ENCODE measurements at regions of chr2 and their contacts with region 1.

Region 1: DNA sequence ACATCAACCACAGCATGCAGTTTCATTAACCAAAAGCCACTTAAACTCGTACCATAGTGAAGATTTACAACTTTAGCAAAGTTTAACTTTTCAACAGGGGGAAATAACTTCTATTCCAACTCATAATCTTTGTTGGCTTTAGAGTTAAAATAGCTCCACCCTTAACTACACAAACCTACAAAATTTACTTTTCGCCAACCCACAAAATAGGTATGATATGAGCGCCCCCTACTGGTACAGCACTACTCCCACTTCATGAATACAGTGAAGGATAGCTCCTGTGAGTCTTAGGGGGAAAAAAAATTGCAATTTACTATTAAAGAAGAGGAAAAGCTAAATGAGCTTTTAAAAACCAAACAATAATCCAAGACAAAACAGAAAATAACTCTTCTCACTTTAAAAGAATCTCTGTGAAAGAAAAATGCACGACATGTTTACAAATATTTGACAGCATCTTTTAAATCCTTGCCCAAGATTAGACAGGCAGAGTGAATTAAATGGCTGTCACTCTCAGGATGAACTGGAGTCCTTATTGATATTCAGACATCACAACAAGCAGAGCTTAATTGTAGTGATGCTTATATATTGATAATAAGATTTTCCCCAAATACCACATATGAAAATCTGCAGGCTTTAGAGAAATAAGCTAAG is 32.2 kb downstream of the TMEFF2 start:
- DNase-seq: peak; percentile 80
- ATAC-seq: peak; percentile 81
- H3K4me3 Mint-ChIP-seq: no peak overlapping the region
- H3K27ac Mint-ChIP-seq: no peak overlapping the region
- H3K4me1 Mint-ChIP-seq: peaks cover 7% of the 10 kb centered on the region
- H3K27me3 Mint-ChIP-seq: peaks cover 13% of the 10 kb centered on the region

Region 2: DNA sequence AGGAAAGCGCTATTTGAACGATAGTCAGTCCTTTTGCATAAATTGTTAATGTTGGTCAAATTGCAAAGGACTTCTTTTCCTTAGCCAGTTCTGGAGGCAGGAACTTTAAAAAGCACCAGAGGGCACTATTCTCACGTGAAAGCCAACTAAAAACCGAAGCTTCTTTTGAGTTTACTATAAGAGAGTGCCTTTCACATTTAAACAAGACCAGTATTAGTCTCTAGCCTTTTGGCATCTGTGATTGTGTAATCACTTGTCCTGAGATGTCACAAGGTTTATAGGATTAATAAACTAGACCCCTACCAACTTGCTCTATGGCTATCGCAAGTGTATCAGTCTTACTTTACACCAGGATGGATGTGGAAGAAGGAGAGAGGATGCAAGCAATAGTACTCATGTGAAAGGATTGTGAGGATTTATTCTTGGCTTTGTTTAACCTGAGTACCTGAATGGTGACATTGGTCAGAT is 997.3 kb before region 1 on chr2:
- CTCF ChIA-PET with region 1: interaction called, 12 read pairs
- POLR2A ChIA-PET with region 1: no interaction called
- DNase-seq: peak; percentile 47
- ATAC-seq: peak; percentile 87
- H3K4me3 Mint-ChIP-seq: no peak overlapping the region
- H3K27ac Mint-ChIP-seq: no peak overlapping the region
- H3K4me1 Mint-ChIP-seq: peaks cover 22% of the 10 kb centered on the region
- H3K27me3 Mint-ChIP-seq: peaks cover 12% of the 10 kb centered on the region

Region 3: DNA sequence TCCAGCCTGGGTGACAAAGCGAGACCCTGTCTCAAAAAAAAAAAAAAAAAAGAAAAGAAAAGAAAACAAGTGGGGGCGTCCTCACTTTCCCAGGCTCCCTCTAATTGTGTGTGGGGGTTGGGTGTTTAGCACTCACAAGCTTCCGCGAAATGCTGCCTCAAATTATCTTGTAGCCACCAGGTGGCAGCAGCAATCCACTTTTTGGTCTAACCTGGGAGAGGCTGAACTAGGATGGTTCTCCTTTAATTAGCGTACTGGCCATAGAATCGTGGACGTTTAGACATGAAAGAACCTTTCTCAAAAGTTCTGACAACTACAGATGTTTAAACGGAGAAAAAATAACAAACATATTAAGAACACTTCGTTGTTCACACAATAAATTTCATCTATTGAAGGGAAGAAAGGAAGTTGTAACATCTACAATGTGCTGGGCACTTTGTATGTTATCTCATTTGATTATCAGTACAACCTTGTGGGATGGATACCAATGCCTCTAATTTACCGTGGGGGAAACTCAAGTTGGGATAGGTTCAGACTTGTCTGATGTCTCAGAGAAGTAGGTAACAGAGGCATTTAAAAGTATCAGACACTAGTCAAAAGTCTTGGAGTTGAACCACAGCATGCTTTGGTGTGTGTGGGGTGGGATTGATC is 607.3 kb before region 1 on chr2:
- CTCF ChIA-PET with region 1: interaction called, 95 read pairs
- POLR2A ChIA-PET with region 1: no interaction called
- DNase-seq: peak; percentile 87
- ATAC-seq: peak; percentile 88
- H3K4me3 Mint-ChIP-seq: no peak overlapping the region
- H3K27ac Mint-ChIP-seq: no peak overlapping the region
- H3K4me1 Mint-ChIP-seq: peaks cover 21% of the 10 kb centered on the region
- H3K27me3 Mint-ChIP-seq: peaks cover 28% of the 10 kb centered on the region

Region 4: GRCh38 chr2:191758518-191759507 is 403.7 kb before region 1 on chr2:
- CTCF ChIA-PET with region 1: interaction called, 20 read pairs
- POLR2A ChIA-PET with region 1: no interaction called
- DNase-seq: peak; percentile 64
- ATAC-seq: peak; percentile 97
- H3K4me3 Mint-ChIP-seq: no peak overlapping the region
- H3K27ac Mint-ChIP-seq: no peak overlapping the region
- H3K4me1 Mint-ChIP-seq: peaks cover 4% of the 10 kb centered on the region
- H3K27me3 Mint-ChIP-seq: peaks cover 16% of the 10 kb centered on the region

Region 5: DNA sequence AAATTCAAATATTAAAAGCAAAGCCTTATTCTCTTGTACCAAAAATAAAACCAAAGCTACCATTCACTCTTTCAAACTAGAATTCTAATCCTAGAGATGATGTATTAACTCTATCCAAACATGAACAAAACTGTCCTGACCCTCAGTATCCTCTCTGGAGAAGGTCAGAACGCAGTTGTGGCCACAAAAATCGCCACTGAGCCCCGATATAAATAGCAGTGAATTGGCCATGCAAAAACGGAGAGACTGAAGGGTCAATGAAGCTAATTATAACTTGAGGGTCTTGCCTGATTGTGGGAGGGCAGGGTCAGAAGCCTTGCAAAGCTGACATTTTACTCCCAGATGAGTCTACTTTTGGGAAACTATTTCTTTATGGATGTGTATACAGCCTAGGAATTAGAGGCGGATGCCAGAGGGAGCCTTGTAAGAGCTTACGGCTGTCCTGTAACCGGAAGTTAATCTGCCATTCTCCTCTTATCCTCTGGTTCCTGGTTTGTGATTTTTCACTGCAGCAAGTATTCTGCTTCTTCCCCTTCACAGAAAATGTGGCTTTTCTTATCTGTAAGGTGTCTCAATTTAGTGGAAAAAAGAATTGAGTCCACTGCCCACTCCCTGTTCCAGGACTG is 343.7 kb before region 1 on chr2:
- CTCF ChIA-PET with region 1: interaction called, 65 read pairs
- POLR2A ChIA-PET with region 1: no interaction called
- DNase-seq: no peak
- ATAC-seq: no peak
- H3K4me3 Mint-ChIP-seq: no peak overlapping the region
- H3K27ac Mint-ChIP-seq: no peak overlapping the region
- H3K4me1 Mint-ChIP-seq: no peaks in the 10 kb centered on the region
- H3K27me3 Mint-ChIP-seq: peaks cover 20% of the 10 kb centered on the region

Region 6: GRCh38 chr2:192007581-192008228 is 154.8 kb before region 1 on chr2:
- CTCF ChIA-PET with region 1: no interaction called
- POLR2A ChIA-PET with region 1: no interaction called
- DNase-seq: no peak
- ATAC-seq: no peak
- H3K4me3 Mint-ChIP-seq: no peak overlapping the region
- H3K27ac Mint-ChIP-seq: no peak overlapping the region
- H3K4me1 Mint-ChIP-seq: no peaks in the 10 kb centered on the region
- H3K27me3 Mint-ChIP-seq: peaks cover 10% of the 10 kb centered on the region

Region 7: DNA sequence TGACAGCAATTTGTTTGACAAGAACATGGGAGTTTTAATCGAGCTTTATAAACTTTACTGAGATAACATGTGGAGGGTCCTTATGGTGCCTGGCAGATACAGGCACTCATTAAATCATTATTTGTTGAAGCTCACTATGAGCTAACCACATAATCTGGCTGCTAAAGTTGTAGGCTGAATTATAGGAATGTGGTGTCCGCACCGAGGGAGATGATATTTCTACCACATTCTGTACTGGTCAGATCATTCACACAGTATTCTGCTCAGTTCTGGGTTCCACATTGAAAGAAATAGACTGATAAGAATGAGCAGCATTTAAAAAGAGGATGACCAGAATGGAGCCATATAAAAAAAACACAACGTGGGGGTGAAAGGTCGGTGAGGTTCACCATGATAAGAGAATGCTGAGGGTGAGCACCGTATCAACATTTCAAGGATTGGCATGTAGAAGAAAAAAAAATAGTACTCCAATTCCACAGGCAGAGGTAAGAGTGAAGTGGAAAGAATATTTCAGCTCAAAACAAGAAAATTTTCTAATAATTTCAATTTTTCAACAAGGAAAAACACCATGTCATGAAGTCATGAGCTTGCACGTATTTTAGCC is 22.2 kb before region 1 on chr2:
- CTCF ChIA-PET with region 1: interaction called, 19 read pairs
- POLR2A ChIA-PET with region 1: no interaction called
- DNase-seq: no peak
- ATAC-seq: no peak
- H3K4me3 Mint-ChIP-seq: no peak overlapping the region
- H3K27ac Mint-ChIP-seq: no peak overlapping the region
- H3K4me1 Mint-ChIP-seq: no peaks in the 10 kb centered on the region
- H3K27me3 Mint-ChIP-seq: peaks cover 4% of the 10 kb centered on the region